ENCODE measurements at regions of chr3 and their contacts with region 1.

Region 1: DNA sequence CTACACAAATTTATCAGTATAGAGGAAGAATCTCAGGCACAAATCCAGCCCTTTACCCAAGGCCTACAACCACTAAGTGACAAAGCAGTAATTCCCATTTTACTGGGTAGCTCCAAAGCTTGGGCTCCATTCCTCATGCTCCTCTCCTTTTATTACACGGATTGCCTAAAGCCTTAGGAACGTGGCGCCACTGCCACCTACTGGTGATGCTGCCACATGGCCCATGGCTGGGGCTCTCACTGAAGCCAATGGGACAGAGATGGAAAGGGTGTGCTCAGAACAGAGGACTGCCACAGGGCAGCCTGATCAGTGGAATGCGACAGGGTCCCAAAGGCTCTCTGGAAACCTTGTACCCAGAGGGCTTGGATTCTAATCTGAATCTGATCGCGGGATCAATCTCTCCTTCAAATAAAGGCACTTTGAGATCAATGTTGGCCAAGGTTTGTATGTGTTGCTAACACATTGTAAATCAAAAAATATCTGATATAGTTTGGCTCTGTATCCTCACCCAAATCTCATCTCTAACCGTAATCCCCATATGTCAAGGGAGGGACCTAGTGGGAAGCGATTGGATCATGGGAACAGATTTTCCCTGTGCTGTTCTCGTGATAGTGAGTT is 33.5 kb upstream of the LYZL4 start:
- DNase-seq: peak; percentile 53 to 74 (median 62)
- H3K4me3 ChIP-seq: no peak overlapping the region
- H3K4me3 Mint-ChIP-seq: no peak overlapping the region
- H3K27ac ChIP-seq: no peak overlapping the region
- H3K27ac Mint-ChIP-seq: no peak overlapping the region
- H3K4me1 ChIP-seq: no peaks in the 10 kb centered on the region
- H3K4me1 Mint-ChIP-seq: no peaks in the 10 kb centered on the region
- H3K27me3 ChIP-seq: peaks cover 0 to 4% of the 10 kb centered on the region in 2 donors
- H3K27me3 Mint-ChIP-seq: peaks cover 3 to 29% (median 20%) of the 10 kb centered on the region in 3 donors
- CTCF ChIP-seq: peak; percentile 98

Region 2: DNA sequence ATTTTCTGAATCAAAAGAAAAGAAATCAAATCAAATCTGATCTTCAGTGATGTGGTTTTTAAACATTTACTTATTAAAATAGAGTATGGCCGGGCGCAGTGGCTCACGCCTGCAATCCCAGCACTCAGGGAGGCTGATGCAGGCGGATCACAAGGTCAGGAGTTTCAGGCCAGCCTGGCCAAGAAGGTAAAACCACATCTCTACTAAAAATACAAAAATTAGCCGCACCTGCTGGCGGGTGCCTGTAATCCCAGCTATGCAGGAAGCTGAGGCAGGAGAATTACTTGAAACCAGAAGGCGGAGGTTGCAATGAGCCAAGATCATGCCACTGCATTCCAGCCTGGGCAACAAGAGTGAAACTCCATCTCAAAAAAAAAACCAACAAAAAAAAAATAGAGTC is 651.1 kb before region 1 on chr3:
- intact Hi-C with region 1: no loop called
- DNase-seq: no peak
- H3K4me3 ChIP-seq: no peak overlapping the region
- H3K4me3 Mint-ChIP-seq: no peak overlapping the region
- H3K27ac ChIP-seq: no peak overlapping the region
- H3K27ac Mint-ChIP-seq: no peak overlapping the region
- H3K4me1 ChIP-seq: no peaks in the 10 kb centered on the region
- H3K4me1 Mint-ChIP-seq: no peaks in the 10 kb centered on the region
- H3K27me3 ChIP-seq: no peaks in the 10 kb centered on the region
- H3K27me3 Mint-ChIP-seq: no peaks in the 10 kb centered on the region
- CTCF ChIP-seq: no peak

Region 3: GRCh38 chr3:41900265-41900664 is 543.7 kb before region 1 on chr3:
- intact Hi-C with region 1: loop called in 1 of 2 experiments (anchors 10 kb)
- DNase-seq: peak in 2 of 3 donors; percentile 10 to 21
- H3K4me3 ChIP-seq: no peak overlapping the region
- H3K4me3 Mint-ChIP-seq: no peak overlapping the region
- H3K27ac ChIP-seq: no peak overlapping the region
- H3K27ac Mint-ChIP-seq: no peak overlapping the region
- H3K4me1 ChIP-seq: no peaks in the 10 kb centered on the region
- H3K4me1 Mint-ChIP-seq: peaks cover 1% of the 10 kb centered on the region
- H3K27me3 ChIP-seq: no peaks in the 10 kb centered on the region
- H3K27me3 Mint-ChIP-seq: no peaks in the 10 kb centered on the region
- CTCF ChIP-seq: no peak

Region 4: GRCh38 chr3:42192334-42193200 is 251.4 kb before region 1 on chr3:
- intact Hi-C with region 1: no loop called
- DNase-seq: peak; percentile 37 to 81 (median 50)
- H3K4me3 ChIP-seq: peak overlapping the region in 1 of 3 experiments; percentile 21
- H3K4me3 Mint-ChIP-seq: peak overlapping the region in 1 of 2 donors; percentile 35
- H3K27ac ChIP-seq: peak overlapping the region; percentile 17 to 87
- H3K27ac Mint-ChIP-seq: peak overlapping the region; percentile 71 to 97 (median 89)
- H3K4me1 ChIP-seq: peaks cover 28 to 31% of the 10 kb centered on the region in 2 donors
- H3K4me1 Mint-ChIP-seq: peaks cover 30% of the 10 kb centered on the region
- H3K27me3 ChIP-seq: no peaks in the 10 kb centered on the region
- H3K27me3 Mint-ChIP-seq: peaks cover 0 to 1% (median 0%) of the 10 kb centered on the region in 3 donors
- CTCF ChIP-seq: no peak

Region 5: DNA sequence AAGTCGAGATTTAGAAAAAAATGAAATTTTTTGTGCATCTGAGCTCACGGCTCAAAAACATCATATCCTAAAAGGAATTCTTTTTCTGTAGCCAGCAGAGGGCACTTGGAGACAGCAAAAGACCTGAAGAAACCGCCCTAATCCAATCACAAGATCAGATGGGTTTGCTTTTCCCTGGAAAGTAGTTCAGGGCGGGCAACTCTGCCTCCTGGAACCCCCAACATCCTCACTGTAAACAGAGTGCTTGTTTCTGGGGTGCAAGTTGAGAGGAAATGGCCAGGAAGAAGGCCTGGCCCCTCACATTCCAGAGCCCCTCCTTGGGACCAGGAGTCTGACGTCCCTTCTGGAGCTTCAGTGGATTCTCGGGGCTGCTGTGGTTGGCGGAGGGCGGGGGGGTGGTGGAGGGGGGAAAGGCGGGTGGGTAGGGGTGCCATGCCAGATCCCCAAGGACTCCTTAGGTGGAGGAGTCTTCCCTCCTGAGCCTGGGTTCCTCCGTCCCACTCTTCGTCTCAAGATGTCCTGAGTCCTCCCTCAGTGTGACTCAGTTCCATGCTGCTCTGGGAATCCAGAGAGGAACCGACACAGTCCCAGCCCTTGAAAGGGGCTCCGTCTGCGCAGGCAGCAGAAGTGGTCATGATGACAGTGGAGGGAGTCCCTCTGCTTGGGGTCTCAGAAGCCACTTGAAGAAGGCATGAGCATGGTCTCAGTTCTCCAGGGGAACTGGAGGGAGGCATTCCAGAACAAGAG is 213.8 kb before region 1 on chr3:
- intact Hi-C with region 1: loop called in 1 of 2 experiments (anchors 10 kb)
- DNase-seq: no peak
- H3K4me3 ChIP-seq: no peak overlapping the region
- H3K4me3 Mint-ChIP-seq: no peak overlapping the region
- H3K27ac ChIP-seq: no peak overlapping the region
- H3K27ac Mint-ChIP-seq: peak overlapping the region in 1 of 7 donors; percentile 13
- H3K4me1 ChIP-seq: no peaks in the 10 kb centered on the region
- H3K4me1 Mint-ChIP-seq: no peaks in the 10 kb centered on the region
- H3K27me3 ChIP-seq: no peaks in the 10 kb centered on the region
- H3K27me3 Mint-ChIP-seq: peaks cover 4 to 7% (median 6%) of the 10 kb centered on the region in 3 donors
- CTCF ChIP-seq: peak; percentile 25

Region 6: DNA sequence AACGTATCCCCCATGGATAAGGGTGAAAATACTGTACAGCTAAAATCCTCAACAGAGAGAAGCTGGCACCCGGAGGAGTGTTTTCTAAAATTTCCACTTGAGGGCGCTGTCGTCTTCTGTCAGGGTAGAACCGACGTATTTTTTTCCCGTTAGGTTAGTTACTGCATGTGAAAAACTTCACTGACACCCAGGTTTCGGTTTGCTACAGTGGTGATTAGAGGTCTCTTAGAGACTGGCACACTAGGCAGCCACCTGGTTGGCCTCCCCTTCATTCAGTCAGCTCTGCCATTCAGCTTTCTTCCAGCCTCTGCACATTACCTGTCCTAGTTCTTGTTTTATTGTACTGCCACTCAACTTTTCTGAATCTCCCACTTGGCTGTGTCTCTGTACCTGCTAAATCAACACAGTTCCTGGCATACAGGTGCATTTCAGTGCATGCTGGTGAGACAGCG is 196.3 kb before region 1 on chr3:
- intact Hi-C with region 1: loop called (anchors 5 kb)
- DNase-seq: peak in 2 of 3 donors; percentile 4 to 20
- H3K4me3 ChIP-seq: no peak overlapping the region
- H3K4me3 Mint-ChIP-seq: no peak overlapping the region
- H3K27ac ChIP-seq: no peak overlapping the region
- H3K27ac Mint-ChIP-seq: no peak overlapping the region
- H3K4me1 ChIP-seq: no peaks in the 10 kb centered on the region
- H3K4me1 Mint-ChIP-seq: peaks cover 3% of the 10 kb centered on the region
- H3K27me3 ChIP-seq: peaks cover 2 to 5% of the 10 kb centered on the region in 2 donors
- H3K27me3 Mint-ChIP-seq: peaks cover 7 to 16% (median 13%) of the 10 kb centered on the region in 3 donors
- CTCF ChIP-seq: peak; percentile 77